GM12878 (cell line): ENCODE measurements at regions of chr12 and their contacts with region 1.

Region 1: DNA sequence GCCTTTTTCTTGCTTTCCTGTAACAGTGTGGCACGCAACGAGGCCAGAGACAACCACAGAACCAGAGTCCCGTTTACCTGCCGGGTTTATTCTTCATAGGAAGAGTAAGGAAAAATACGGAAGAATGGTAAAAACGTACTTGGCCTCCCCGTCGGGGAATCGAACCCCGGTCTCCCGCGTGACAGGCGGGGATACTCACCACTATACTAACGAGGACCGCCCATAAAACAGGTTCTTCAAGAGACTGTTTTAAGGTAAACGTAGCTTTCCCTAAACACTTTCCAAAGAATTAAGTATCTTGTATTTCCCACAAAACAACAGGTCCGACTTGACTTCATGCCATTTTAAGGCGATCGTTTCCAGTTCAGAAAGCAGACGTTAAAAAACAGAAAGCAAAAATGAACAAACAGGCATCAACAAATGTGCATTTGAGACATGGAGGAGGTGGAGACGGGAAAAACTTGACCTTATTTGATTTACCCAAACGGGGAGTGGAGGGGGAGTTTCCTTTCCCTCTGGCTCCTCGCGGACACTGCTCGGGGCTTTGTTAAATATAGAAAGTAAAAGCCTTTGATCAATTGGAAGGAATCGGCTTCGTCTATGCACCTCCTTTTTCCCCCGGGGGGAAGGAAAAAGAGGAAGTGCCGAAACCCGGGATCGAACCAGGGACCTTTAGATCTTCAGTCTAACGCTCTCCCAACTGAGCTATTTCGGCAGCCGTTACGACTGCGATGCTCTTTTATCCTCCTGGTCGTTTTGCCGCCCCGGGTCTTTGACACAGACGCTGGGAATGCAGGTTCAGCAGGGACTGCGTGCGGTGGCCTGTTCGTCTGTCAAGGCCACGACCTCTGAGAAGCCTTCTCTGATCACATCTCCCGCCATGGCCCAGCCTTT is 13.0 kb upstream of the UBC start:
- DNase-seq: peak; percentile 90
- ATAC-seq: peak; percentile 85
- H3K4me3 ChIP-seq: peak overlapping the region; percentile 80
- H3K27ac ChIP-seq: peak overlapping the region; percentile 90
- H3K4me1 ChIP-seq: peaks cover 11% of the 10 kb centered on the region
- H3K27me3 ChIP-seq: no peaks in the 10 kb centered on the region
- CTCF ChIP-seq: no peak
- EP300 ChIP-seq: peak in 1 of 2 experiments; percentile 68; a peak in 1 of 4 replicates
- POLR2A ChIP-seq: no peak
- RAD21 ChIP-seq: no peak

Region 2: GRCh38 chr12:124940549-124941527 is 13.4 kb after region 1 on chr12:
- CTCF ChIA-PET with region 1: interaction called, 523 read pairs
- POLR2A ChIA-PET with region 1: interaction called, 346 read pairs
- RAD21 ChIA-PET with region 1: interaction called, 246 read pairs
- SMC1A ChIA-PET with region 1: interaction called, 294 read pairs
- in situ Hi-C with region 1: no loop called
- intact Hi-C with region 1: loop called (anchors 1 kb)
- DNase-seq: peak; percentile 82
- ATAC-seq: peak; percentile 74
- H3K4me3 ChIP-seq: peak overlapping the region; percentile 68
- H3K27ac ChIP-seq: peak overlapping the region; percentile 97
- H3K4me1 ChIP-seq: peaks cover 17% of the 10 kb centered on the region
- H3K27me3 ChIP-seq: no peaks in the 10 kb centered on the region
- CTCF ChIP-seq: peak; percentile 92 to 98 (median 93)
- EP300 ChIP-seq: no peak
- POLR2A ChIP-seq: peak; percentile 68
- RAD21 ChIP-seq: peak; percentile 63

Region 3: DNA sequence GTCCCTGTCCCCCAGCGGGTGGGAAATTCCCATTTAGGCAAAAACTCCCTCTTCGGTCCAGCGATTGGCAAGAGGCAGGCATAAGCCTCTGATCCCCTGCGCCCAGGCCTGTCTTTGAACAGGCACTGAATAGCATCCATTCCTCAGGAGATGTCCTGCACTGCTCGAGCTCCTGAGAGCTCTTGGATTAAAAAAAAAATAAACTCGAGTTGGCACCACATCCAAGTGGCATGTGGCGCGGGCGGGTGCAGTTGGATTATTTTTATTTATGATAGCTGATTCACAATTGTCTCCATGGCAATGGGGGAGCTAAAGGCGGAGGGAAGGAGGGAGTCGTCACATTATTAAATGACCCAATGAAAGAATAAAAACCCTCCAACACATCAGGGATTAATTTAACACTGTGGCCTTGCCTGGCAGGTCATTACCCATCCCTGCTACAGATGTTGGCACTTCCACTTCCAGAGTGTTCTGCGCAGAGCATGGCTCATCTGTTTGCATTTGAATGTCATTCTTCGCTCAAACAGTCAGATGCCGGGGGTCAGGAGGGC is 345.0 kb after region 1 on chr12:
- CTCF ChIA-PET with region 1: no interaction called
- POLR2A ChIA-PET with region 1: no interaction called
- RAD21 ChIA-PET with region 1: no interaction called
- SMC1A ChIA-PET with region 1: no interaction called
- in situ Hi-C with region 1: no loop called
- intact Hi-C with region 1: no loop called
- DNase-seq: no peak
- ATAC-seq: no peak
- H3K4me3 ChIP-seq: no peak overlapping the region
- H3K27ac ChIP-seq: no peak overlapping the region
- H3K4me1 ChIP-seq: no peaks in the 10 kb centered on the region
- H3K27me3 ChIP-seq: no peaks in the 10 kb centered on the region; a peak in 2 of 4 replicates
- CTCF ChIP-seq: no peak
- EP300 ChIP-seq: no peak
- POLR2A ChIP-seq: no peak
- RAD21 ChIP-seq: no peak

Region 4: GRCh38 chr12:125434936-125435443 is 507.5 kb after region 1 on chr12:
- CTCF ChIA-PET with region 1: no interaction called
- POLR2A ChIA-PET with region 1: no interaction called
- RAD21 ChIA-PET with region 1: no interaction called
- SMC1A ChIA-PET with region 1: no interaction called
- in situ Hi-C with region 1: loop called (anchors 10 kb)
- intact Hi-C with region 1: no loop called
- DNase-seq: peak; percentile 82
- ATAC-seq: peak; percentile 92
- H3K4me3 ChIP-seq: no peak overlapping the region
- H3K27ac ChIP-seq: peak overlapping the region; percentile 17; the same call in 1 of the 2 replicates
- H3K4me1 ChIP-seq: peaks cover 11% of the 10 kb centered on the region
- H3K27me3 ChIP-seq: no peaks in the 10 kb centered on the region
- CTCF ChIP-seq: no peak
- EP300 ChIP-seq: peak; percentile 73 to 90; a peak in 3 of 4 replicates
- POLR2A ChIP-seq: no peak
- RAD21 ChIP-seq: no peak